Calu3 (cell line): ENCODE measurements at regions of chr7 and their contacts with region 1.

Region 1: DNA sequence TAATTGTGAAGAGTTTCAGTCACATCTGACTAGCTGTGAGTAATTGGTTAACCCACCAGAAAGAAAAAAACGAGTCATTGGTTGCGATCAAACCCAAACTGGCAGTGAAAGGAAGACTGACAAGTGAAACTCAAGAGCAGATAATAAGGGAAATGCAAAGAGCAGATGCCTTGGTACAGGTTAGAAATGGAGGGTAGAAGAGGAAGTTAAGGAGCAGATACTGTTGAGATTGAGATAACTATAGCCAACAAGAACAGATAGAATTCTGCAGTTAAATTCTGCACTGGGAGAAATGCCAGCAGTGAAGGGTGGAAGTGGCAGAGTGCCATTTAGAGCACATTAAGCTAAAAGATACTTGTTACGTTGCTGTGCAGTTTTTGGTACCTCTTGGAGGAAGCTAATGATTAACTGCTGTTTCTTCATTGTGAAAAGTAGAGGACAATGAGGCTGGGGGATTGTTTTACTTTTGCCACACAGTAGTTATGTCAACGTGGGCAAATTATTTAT is 65.8 kb downstream of the CDK13 start:
- DNase-seq: peak; percentile 49
- H3K4me3 Mint-ChIP-seq: peak overlapping the region; percentile 5
- H3K27ac Mint-ChIP-seq: peak overlapping the region; percentile 14
- H3K4me1 Mint-ChIP-seq: peaks cover 34% of the 10 kb centered on the region
- H3K27me3 Mint-ChIP-seq: no peaks in the 10 kb centered on the region
- CTCF ChIP-seq: no peak

Region 2: DNA sequence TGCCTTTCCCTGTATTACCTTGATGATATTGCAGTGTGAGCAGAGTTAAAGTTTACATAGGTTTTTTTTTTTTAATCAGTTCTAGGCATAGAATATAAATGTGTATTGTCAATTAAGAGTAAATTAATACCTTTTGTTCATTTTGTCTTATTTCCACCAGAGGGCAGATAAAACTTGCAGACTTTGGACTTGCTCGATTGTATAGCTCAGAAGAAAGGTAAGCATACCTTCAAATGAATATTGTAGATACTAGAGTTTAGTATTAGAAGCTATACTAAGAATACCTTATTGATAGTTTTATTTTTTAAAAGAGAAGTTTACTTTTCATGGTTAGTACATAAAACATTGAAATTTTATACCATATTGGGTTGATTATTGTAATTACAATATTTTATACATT is 31.8 kb after region 1 on chr7:
- CTCF ChIA-PET with region 1: interaction called, 12 read pairs
- intact Hi-C with region 1: no loop called
- DNase-seq: no peak
- H3K4me3 Mint-ChIP-seq: no peak overlapping the region
- H3K27ac Mint-ChIP-seq: no peak overlapping the region
- H3K4me1 Mint-ChIP-seq: no peaks in the 10 kb centered on the region
- H3K27me3 Mint-ChIP-seq: no peaks in the 10 kb centered on the region
- CTCF ChIP-seq: peak; percentile 38